OCI-LY7 (cell line): ENCODE measurements at regions of chr16 and their contacts with region 1.

Region 1: DNA sequence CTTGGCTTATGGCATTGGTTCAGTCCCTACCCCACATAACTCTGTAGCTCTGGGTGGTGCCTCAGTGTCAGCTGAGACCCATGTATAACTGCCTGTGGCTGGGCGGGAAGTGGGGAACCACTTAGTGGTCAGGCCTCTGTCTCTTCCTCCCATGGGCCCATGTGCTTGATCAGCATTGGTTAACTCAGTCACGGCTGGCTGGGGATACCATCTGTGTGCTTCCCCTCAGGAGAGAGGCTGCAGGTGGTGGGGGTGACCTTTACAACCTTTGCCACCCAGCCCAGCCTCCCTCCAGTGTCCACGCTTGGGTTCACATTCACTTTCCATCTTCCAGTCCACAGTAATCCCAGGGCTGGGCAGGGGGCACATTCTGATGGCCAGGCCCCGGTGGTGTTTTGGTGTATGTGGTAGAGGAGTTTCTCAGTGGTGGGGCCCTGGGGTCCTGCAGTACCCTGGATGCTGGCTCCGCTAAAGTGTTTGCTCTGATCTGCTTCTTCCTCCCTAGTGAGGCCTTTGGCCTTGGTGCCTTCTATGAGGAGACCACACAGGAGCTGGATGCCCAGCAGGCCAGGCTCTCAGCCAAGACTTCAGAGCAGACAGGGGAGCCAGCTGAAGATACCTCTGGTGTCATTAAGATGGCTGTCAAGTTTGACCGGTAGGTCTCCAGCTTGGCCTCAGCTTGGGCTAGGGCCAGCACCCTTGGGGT is 10.2 kb upstream of the NFATC3 start:
- DNase-seq: peak; percentile 99
- H3K4me3 ChIP-seq: peak overlapping the region; percentile 43
- H3K27ac ChIP-seq: peak overlapping the region; percentile 91
- H3K4me1 ChIP-seq: peaks cover 92% of the 10 kb centered on the region
- CTCF ChIP-seq: no peak

Region 2: GRCh38 chr16:68085259-68086071 is 10.5 kb after region 1 on chr16 and contains the start of gene NFATC3:
- CTCF ChIA-PET with region 1: interaction called, 34 read pairs
- POLR2A ChIA-PET with region 1: interaction called, 53 read pairs
- intact Hi-C with region 1: no loop called
- DNase-seq: peak; percentile 98
- H3K4me3 ChIP-seq: peak within 1 kb of the TSS; percentile 91
- H3K27ac ChIP-seq: peak within 1 kb of the TSS; percentile 90
- H3K4me1 ChIP-seq: peaks cover 62% of the 10 kb centered on the region
- CTCF ChIP-seq: no peak
- total RNA-seq, gene NFATC3: 60.9 and 73.4 TPM in 2 replicates

Region 3: DNA sequence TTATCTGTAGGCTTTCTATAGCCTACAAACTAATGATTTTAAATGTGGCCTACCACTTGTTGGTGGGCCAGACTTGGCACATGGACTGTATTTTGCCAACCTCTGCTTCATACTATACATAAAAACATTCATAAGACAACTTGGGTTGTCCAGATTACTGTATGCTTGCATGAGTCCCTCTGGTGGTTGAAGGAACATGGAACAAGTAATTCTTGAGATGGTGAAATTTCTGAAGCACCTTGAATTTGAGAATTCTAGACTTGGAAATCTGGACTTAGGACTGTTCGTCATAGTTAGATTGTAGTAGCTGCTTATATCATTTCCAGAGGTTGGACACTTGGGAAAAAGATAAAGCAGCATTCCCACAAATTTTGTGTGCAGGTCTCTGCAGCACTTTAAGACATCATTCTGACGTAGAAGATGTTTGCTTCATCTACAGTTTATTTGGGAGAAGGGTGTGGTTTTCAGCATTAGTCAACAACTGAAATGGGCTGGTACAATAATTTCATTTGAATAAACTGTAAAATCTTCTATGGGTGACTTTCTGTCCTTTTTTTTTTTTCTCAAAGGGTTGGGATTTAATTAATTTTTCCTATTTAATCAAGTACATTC is 41.4 kb after region 1 on chr16:
- CTCF ChIA-PET with region 1: interaction called, 3 read pairs
- POLR2A ChIA-PET with region 1: interaction called, 3 read pairs
- intact Hi-C with region 1: loop called (anchors 1 kb)
- DNase-seq: peak; percentile 60
- H3K4me3 ChIP-seq: no peak overlapping the region
- H3K27ac ChIP-seq: no peak overlapping the region
- H3K4me1 ChIP-seq: peaks cover 42% of the 10 kb centered on the region
- CTCF ChIP-seq: peak; percentile 85

Region 4: DNA sequence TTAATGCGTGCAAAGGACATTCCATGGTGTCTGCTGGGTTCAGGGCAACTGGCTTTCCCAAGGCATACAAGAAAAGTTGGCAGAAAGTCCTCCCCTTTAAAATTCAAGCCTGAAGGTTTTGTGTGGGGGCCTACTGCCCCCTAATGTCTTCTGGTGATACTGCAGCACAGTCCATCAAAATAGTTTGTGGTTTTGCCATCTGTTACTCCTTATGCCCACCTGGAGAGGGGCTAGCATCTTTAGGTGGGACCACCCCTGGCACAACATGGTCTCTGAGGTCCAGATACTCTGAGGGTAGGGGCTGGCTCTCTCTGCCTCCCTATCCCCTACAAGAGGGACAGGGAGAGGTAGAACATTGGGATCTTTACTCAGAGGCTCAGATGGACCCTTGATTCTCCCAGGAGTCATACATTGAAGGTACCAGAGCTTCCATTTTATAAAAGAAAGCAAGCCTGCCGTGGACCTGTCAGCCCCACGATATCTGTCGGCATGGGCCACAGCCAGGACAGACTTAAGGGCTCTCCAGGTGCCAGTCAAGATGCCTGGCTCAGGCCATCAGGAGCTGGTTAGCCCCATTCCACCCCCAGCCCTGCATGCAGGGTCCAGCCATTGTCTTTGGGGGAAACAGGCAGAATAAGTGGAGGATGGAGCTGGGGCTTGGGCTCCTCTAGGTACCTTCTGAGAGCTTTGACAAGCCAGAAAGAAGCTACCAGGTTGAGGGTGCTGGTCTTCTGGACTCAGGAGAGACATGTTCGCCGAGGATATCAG is 154.6 kb after region 1 on chr16:
- CTCF ChIA-PET with region 1: no interaction called
- POLR2A ChIA-PET with region 1: interaction called, 6 read pairs
- intact Hi-C with region 1: loop called (anchors 1 kb)
- DNase-seq: peak; percentile 71
- H3K4me3 ChIP-seq: no peak overlapping the region
- H3K27ac ChIP-seq: no peak overlapping the region
- H3K4me1 ChIP-seq: peaks cover 44% of the 10 kb centered on the region
- CTCF ChIP-seq: peak; percentile 97